Left ventricle myocardium superior (tissue), 1 donor: ENCODE measurements at regions of chr6 and their contacts with region 1.

Region 1: DNA sequence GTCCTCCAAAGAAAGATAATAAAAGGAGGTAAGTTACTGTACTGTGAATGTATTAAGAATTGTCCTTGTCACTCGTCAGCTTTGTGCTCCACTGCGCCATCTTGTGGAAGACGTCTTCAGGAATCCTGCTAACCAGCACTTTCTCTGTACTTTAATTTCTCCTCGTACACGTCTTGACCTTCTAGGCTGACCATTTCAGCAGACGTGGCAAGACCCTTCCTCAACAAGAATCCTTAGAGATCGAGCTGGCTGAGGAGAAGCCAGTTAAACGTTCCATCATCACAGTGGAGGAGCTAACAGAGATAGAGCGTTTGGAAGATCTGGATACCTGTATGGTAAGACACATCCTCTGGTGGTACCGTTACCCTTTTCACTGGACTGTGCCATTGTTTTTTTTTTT is 95.5 kb upstream of the SCGN start:
- DNase-seq: peak; percentile 77
- ATAC-seq: peak; percentile 60

Region 2: DNA sequence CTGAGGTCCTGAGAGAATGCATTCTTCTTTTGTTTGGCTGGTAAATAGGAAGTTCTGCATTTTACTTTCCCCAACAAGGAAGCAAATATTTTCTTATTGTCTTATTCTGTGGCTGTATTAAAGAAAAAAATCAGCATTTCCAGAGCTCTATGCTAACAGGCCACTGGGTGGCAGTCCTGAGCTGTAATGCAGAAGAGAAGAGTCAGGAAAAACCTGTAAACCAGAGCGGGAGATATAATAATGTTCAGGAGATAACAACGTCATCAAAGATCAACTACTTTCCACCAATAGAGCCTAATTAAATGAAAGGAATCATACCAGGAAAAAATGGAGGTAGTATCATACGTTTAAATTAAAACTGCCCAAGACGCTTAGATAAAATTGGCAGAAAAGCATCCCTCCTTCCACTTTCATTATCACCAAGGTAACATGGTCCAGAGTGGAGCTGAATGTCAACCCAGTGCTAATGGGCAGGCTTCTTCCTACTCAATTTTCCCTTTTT is 333.0 kb before region 1 on chr6:
- intact Hi-C with region 1: loop called (anchors 1 kb)
- DNase-seq: peak; percentile 67
- ATAC-seq: peak; percentile 63

Region 3: GRCh38 chr6:25354078-25354932 is 202.2 kb before region 1 on chr6:
- intact Hi-C with region 1: no loop called
- DNase-seq: no peak
- ATAC-seq: peak; percentile 44